ENCODE measurements at regions of chr1 and their contacts with region 1.

Region 1: GRCh38 chr1:27392096-27392777 is at the start of gene GPR3:
- DNase-seq: peak; percentile 91 to 94
- H3K4me3 ChIP-seq: peak within 1 kb of the TSS; percentile 15 to 41
- H3K27ac ChIP-seq: peak within 1 kb of the TSS; percentile 49 to 53
- H3K4me1 ChIP-seq: peaks cover 6 to 8% of the 10 kb centered on the region in 2 donors
- H3K27me3 ChIP-seq: no peaks in the 10 kb centered on the region
- CTCF ChIP-seq: peak; percentile 61 to 67 (median 66)
- POLR2A ChIP-seq: peak; percentile 38 to 45
- total RNA-seq, gene GPR3: 0.55 to 1.9 TPM in 2 of 4 donors, not detected in the others

Region 2: GRCh38 chr1:27300341-27301051 is 91.7 kb before region 1 on chr1:
- intact Hi-C with region 1: loop called (anchors 5 kb)
- DNase-seq: peak; percentile 86 to 92
- H3K4me3 ChIP-seq: no peak overlapping the region
- H3K27ac ChIP-seq: peak overlapping the region; percentile 84 to 89
- H3K4me1 ChIP-seq: peaks cover 4 to 12% of the 10 kb centered on the region in 2 donors
- H3K27me3 ChIP-seq: no peaks in the 10 kb centered on the region
- CTCF ChIP-seq: peak; percentile 97 to 100 (median 98)
- POLR2A ChIP-seq: no peak

Region 3: DNA sequence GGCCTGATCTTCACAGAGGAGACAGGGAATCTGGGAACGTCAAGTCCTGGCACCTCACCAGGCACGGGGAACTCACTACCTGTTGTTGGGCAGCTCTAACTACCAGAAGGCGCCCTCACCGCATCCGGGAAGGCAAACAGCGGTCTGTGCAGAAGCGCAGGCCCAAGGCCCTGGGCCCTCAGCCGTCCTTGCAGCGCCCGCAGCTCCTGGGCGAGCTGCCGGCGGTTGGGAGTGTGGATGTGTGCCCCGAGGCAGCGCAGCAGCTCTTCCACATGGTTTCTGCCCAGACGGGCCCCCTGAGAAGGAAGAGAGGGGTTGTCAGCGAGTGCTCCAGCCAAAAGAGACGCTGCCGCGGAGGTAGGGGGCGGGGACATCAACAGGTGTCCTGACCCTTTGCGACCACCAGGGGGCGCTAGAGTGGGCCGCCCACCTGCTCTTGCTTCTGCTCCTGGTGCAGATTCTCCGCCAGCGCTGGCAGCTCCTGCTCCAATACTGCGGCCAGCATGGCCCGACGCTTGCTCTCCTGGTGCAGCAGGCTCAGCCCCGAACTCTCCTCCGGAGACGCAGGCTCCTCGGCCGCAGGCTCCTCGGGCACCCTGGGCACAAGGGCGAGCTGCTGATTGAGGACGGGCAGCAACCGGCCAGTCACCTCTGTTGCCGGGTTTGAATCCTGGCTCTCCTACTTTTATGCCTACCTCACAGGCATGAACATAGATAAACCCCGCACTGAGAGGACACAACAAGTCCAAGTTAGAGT is 34.8 kb before region 1 on chr1:
- intact Hi-C with region 1: loop called (anchors 5 kb)
- DNase-seq: peak; percentile 74 to 77
- H3K4me3 ChIP-seq: no peak overlapping the region
- H3K27ac ChIP-seq: no peak overlapping the region
- H3K4me1 ChIP-seq: no peaks in the 10 kb centered on the region
- H3K27me3 ChIP-seq: no peaks in the 10 kb centered on the region
- CTCF ChIP-seq: peak; percentile 94 to 97 (median 96)
- POLR2A ChIP-seq: peak in 1 of 2 donors; percentile 19

Region 4: GRCh38 chr1:27662707-27663393 is 270.6 kb after region 1 on chr1:
- intact Hi-C with region 1: loop called (anchors 5 kb)
- DNase-seq: peak; percentile 85 to 86
- H3K4me3 ChIP-seq: no peak overlapping the region
- H3K27ac ChIP-seq: peak overlapping the region in 1 of 2 donors; percentile 75
- H3K4me1 ChIP-seq: peaks cover 0 to 3% of the 10 kb centered on the region in 2 donors
- H3K27me3 ChIP-seq: no peaks in the 10 kb centered on the region
- CTCF ChIP-seq: peak; percentile 89 to 98 (median 92)
- POLR2A ChIP-seq: no peak